ENCODE measurements at regions of chr19 and their contacts with region 1.

Region 1: DNA sequence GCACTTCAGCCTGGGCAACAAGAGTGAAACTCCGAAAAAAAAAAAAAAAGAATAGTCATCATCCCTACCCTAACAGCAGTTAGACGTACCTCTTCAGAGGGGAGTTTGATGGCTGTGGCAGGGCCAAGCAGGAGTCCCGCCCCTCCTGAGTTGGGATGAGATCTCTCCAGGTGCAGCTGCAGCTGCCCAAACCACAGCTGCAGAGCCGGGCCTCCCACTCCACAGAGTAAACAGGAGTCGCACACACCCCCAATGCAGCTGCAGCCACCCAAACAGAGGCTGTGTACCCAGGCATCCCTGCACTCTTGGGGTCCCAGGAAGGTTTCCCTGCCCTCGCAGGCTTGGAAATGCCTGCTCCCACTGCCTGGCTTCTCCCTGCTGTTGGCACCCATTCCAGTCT is 17.4 kb upstream of the MLLT1 start:
- DNase-seq: no peak
- ATAC-seq: no peak
- H3K4me3 ChIP-seq: no peak overlapping the region
- H3K27ac ChIP-seq: no peak overlapping the region
- H3K4me1 ChIP-seq: no peaks in the 10 kb centered on the region
- H3K27me3 ChIP-seq: no peaks in the 10 kb centered on the region
- CTCF ChIP-seq: no peak
- POLR2A ChIP-seq: no peak

Region 2: DNA sequence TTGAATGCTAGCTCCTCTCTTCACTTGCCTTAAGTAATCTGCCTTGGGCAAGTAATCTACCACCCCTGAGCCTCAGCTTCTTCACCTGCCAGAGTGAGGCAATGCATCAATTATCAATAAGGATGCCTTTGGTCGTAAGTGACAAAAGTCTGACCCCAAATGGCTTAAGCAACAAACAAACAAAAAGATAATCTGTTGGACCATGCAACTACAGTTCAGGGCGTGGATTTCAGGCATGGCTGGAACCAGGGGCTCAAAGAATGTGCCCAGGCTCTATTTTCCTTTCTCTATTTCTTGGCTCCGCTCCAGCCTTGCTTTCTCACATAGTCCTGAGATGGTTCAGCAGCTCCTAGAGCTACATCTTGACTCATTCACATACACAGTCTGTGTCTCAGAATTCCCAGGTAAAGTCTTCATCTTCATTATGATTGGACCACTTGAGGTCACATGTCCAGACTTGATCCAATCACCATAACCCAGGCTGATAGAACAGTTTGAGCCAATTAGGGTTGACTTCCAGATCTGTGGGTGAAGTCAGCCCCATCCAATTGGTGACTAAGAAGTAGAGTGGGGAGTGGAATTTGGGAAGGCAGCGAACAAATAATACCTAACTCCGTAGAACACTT is 132.2 kb before region 1 on chr19:
- intact Hi-C with region 1: loop called (anchors 5 kb)
- DNase-seq: no peak
- ATAC-seq: no peak
- H3K4me3 ChIP-seq: no peak overlapping the region
- H3K27ac ChIP-seq: no peak overlapping the region
- H3K4me1 ChIP-seq: no peaks in the 10 kb centered on the region
- H3K27me3 ChIP-seq: no peaks in the 10 kb centered on the region
- CTCF ChIP-seq: no peak
- POLR2A ChIP-seq: no peak

Region 3: GRCh38 chr19:6218491-6219162 is 78.6 kb before region 1 on chr19:
- intact Hi-C with region 1: loop called (anchors 5 kb)
- DNase-seq: peak; percentile 84 to 91 (median 86)
- ATAC-seq: peak; percentile 67
- H3K4me3 ChIP-seq: no peak overlapping the region
- H3K27ac ChIP-seq: no peak overlapping the region
- H3K4me1 ChIP-seq: peaks cover 15% of the 10 kb centered on the region
- H3K27me3 ChIP-seq: no peaks in the 10 kb centered on the region
- CTCF ChIP-seq: peak; percentile 86 to 96 (median 93)
- POLR2A ChIP-seq: no peak

Region 4: DNA sequence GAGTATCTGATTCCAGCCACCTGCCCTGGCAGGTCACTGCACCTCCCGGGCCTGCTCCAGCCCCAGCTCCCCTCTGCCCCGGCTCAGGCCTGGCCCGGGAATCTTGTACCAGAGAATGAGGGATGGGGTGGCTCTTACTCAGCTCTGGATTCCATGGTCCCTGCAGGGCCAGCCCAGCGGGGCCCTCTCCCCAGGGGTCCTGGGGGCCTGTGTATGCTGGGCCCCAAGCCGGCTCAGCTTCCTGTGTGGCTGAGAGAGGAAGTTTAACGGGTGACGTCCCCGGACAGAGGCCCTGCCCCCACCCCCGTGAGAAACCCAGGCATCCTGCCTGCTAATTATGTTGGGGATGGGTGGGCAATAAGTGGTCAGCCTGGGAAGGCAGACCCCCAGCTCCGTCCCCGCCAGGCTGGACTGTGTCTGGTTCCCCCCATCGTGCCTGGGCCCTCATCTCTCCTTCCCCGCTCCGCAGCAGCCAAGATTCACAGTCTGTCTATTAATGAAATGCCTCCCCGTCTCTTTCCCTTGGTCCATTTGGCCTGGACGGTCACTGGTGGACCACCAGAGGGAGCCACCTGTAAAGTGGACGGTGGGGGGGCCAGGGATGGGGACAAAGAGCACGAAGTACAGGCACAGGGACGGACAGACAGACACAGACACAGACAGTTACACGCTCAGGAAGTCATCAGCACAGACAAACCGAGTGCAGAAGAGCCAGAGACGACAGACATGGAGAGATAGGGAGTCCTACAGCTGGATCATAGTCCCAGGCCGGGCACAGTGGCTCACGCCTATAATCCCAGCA is 184.5 kb after region 1 on chr19 and contains the start of gene DENND1C:
- intact Hi-C with region 1: no loop called
- DNase-seq: peak in 3 of 4 donors; percentile 34 to 43 (median 41)
- ATAC-seq: peak; percentile 47
- H3K4me3 ChIP-seq: no peak within 1 kb of the TSS
- H3K27ac ChIP-seq: no peak within 1 kb of the TSS
- H3K4me1 ChIP-seq: peaks cover 4% of the 10 kb centered on the region
- H3K27me3 ChIP-seq: no peaks in the 10 kb centered on the region
- CTCF ChIP-seq: peak; percentile 17 to 60 (median 46)
- POLR2A ChIP-seq: peak in 1 of 3 donors; percentile 20
- total RNA-seq, gene DENND1C: 1.0 to 1.3 TPM

Region 5: GRCh38 chr19:6577476-6578125 is 280.4 kb after region 1 on chr19:
- intact Hi-C with region 1: no loop called
- DNase-seq: peak in 1 of 4 donors; percentile 33
- ATAC-seq: no peak
- H3K4me3 ChIP-seq: no peak overlapping the region
- H3K27ac ChIP-seq: peak overlapping the region in 1 of 4 donors; percentile 54
- H3K4me1 ChIP-seq: no peaks in the 10 kb centered on the region
- H3K27me3 ChIP-seq: no peaks in the 10 kb centered on the region
- CTCF ChIP-seq: no peak
- POLR2A ChIP-seq: no peak